Activated T-helper 1 cell treated with anti-CD3 and anti-CD28 coated beads, Interleukin-12 subunit alpha, Interleukin-12 subunit beta, Interleukin-2, Interleukin-4 antibody, amounts not matched to agents 30 ng/mL and 10 ng/mL and 1 ng/mL, durations not matched to agents 14 hours and 24 hours and 36 hours (primary cell): ENCODE measurements at regions of chr17 and their contacts with region 1.

Region 1: DNA sequence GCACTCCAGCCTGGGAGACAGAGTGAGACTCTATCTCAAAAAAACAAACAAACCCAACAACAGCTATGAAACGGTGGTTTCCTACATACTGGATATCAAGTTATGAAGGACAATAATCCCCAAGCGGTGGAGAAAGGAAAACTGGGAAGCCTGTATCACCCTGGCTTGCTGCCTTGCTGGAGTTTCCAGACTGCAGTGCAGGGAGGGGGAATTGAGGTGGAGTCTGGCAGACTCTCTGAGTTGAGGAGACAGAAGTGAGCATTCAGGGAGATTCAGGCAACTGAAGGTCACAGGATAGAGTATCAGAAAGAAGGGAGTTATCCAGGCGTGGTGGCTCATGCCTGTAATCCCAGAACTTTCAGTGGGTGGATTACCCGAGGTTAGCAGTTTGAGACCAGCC is 11.9 kb downstream of the QRICH2 start:
- DNase-seq: no peak
- H3K4me3 Mint-ChIP-seq: no peak overlapping the region
- H3K27ac Mint-ChIP-seq: no peak overlapping the region
- H3K4me1 Mint-ChIP-seq: peaks cover 5% of the 10 kb centered on the region
- H3K27me3 Mint-ChIP-seq: no peaks in the 10 kb centered on the region

Region 2: DNA sequence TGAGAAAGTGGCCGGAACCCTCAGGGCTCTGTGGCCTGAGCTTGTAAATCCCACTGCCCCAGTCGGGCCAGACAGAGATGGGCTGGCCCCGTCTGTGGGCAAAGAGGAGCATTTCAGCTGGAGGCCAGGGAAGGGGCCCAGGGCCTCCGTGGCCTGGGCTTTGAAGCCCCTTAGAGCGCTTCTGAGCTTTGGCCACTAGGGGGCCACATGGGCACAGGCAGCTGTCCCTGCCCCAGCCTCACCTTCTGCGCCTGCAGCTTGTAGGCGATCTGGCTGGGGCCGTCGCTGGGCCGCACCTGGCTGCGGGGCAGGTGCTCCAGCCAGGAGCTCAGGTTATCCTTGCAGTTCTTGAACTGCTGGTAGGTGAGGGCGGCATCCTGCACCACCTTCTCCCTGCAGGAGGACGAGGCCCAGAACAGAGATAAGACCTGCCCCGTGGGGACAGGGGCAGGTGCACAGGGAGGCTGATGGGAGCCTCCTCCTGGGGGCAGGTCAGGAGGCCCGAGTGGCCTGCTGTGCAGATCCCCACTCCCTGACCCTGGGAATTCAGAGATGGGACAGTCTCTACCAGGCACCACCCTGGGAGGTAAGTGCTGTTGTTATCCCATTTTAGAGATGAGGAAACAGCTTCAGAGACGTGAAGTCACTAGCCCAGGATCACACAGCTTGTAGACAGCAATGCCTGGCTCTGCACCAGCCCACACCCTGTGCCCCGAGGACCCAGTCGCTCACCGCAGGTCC is 281.8 kb before region 1 on chr17:
- intact Hi-C with region 1: loop called (anchors 1 kb)
- DNase-seq: peak; percentile 67
- H3K4me3 Mint-ChIP-seq: no peak overlapping the region
- H3K27ac Mint-ChIP-seq: no peak overlapping the region
- H3K4me1 Mint-ChIP-seq: no peaks in the 10 kb centered on the region
- H3K27me3 Mint-ChIP-seq: peaks cover 2% of the 10 kb centered on the region

Region 3: DNA sequence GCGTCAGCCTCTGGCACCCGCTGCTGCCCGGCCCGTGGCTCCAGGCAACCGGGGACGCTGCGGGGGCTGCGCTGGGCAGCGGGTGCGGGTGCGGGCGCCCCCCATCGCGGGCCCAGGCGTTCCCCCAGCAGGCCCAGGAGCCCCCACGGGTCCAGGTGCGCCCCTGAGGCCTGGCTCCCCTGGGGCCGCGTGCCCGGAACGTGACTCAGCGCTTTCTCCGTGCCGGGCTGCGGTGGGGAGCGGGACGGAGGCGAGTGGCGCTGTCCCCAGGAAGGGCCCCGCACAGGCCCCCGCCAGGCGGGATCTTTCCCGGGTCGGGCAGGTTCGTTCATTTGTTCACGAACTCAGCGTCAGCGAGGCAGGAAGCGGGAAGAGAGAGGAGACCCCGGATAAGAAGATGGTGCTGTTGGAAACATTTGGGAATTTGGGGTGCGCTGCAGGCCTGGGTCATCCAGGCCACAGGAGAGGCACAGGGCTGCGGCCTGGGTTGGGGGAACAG is 174.2 kb before region 1 on chr17:
- intact Hi-C with region 1: loop called (anchors 1 kb)
- DNase-seq: no peak
- H3K4me3 Mint-ChIP-seq: peak overlapping the region; percentile 39
- H3K27ac Mint-ChIP-seq: no peak overlapping the region
- H3K4me1 Mint-ChIP-seq: peaks cover 17% of the 10 kb centered on the region
- H3K27me3 Mint-ChIP-seq: peaks cover 5% of the 10 kb centered on the region